Activated T-helper 1 cell treated with anti-CD3 and anti-CD28 coated beads, Interleukin-12 subunit alpha, Interleukin-12 subunit beta, Interleukin-2, Interleukin-4 antibody, amounts not matched to agents 30 ng/mL and 10 ng/mL and 1 ng/mL, durations not matched to agents 14 hours and 24 hours and 36 hours (primary cell): ENCODE measurements at regions of chr13 and their contacts with region 1.

Region 1: GRCh38 chr13:49278211-49278610 is 30.5 kb downstream of the CDADC1 start:
- DNase-seq: no peak
- H3K4me3 Mint-ChIP-seq: no peak overlapping the region
- H3K27ac Mint-ChIP-seq: no peak overlapping the region
- H3K4me1 Mint-ChIP-seq: no peaks in the 10 kb centered on the region
- H3K27me3 Mint-ChIP-seq: no peaks in the 10 kb centered on the region

Region 2: GRCh38 chr13:48595431-48596429 is 682.5 kb before region 1 on chr13:
- intact Hi-C with region 1: loop called (anchors 5 kb)
- DNase-seq: peak; percentile 12
- H3K4me3 Mint-ChIP-seq: no peak overlapping the region
- H3K27ac Mint-ChIP-seq: no peak overlapping the region
- H3K4me1 Mint-ChIP-seq: no peaks in the 10 kb centered on the region
- H3K27me3 Mint-ChIP-seq: peaks cover 13% of the 10 kb centered on the region

Region 3: DNA sequence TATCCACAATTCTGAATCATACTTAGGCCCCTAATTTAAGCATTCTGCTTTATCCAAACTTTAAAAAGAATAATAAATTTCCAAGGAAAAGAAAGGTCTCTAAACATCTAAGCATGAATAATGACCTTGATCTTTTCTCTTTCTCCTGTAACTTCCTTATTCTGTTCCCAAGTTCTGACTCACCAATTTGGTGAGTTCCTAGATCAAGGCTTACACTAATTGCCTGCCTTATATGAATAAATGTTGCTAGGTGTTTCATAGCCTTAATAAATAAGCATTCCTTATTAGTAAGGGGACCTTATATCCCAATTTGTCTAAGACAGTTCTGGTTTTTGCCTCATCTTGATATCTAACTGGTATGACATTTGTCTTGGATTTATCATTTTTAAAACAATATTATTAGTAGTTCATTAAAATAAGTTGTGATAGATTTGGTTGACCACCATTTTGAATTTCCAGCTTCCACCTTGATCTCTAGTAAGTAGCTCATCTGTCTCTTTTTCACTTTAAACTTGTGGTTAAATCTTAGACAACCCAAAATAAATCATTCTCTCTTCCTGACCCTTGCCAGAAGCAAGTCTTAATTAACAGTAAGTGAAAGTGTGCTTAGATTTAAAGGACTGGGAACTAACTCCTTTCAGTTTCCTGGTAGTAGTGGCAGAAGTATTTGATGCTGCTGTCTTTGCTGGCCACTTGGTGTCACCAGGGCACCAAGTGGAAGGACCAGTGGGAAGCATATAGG is 179.3 kb before region 1 on chr13:
- intact Hi-C with region 1: loop called (anchors 1 kb)
- DNase-seq: no peak
- H3K4me3 Mint-ChIP-seq: no peak overlapping the region
- H3K27ac Mint-ChIP-seq: no peak overlapping the region
- H3K4me1 Mint-ChIP-seq: peaks cover 18% of the 10 kb centered on the region
- H3K27me3 Mint-ChIP-seq: no peaks in the 10 kb centered on the region

Region 4: DNA sequence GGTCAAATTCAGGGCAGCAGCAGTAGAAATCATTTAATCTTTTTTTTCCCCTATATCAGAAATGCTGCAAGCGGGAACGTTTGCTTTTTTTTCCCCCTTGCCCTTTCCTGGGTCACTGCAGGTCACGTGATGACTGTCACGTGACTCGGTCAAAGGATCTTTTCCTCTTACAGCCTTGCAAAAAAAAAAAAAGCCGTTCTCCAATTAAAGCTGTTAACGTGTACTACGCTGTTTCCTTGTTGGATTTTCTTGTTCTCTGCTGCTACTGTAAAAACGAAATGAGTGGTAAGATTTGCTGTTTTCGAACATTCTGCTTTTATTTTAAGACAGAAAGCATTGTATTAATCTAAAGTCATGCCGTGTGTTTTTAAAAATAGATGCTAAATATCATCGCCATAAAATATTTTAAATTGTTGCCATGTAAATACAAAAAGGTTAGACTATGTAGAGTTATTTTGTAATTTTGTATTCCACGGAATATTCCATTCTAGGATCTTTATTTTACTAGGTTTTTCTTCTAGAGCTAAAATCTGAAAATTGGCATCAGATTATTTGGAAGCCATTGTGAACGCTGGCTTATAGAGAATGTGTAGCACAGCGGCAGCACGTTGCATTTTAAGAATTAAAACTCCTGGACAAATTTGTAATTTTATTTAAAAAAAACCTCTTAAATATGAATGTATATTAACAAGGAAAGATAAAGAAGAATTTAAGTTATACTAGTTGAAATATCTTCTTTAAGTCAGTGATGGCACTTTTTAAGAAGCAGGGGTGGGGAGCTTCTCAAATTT is 167.9 kb before region 1 on chr13:
- intact Hi-C with region 1: loop called (anchors 5 kb)
- DNase-seq: peak; percentile 71
- H3K4me3 Mint-ChIP-seq: peak overlapping the region; percentile 87
- H3K27ac Mint-ChIP-seq: peak overlapping the region; percentile 70
- H3K4me1 Mint-ChIP-seq: peaks cover 31% of the 10 kb centered on the region
- H3K27me3 Mint-ChIP-seq: no peaks in the 10 kb centered on the region

Region 5: GRCh38 chr13:49240017-49240416 is 38.2 kb before region 1 on chr13:
- intact Hi-C with region 1: loop called (anchors 1 kb)
- DNase-seq: no peak
- H3K4me3 Mint-ChIP-seq: no peak overlapping the region
- H3K27ac Mint-ChIP-seq: no peak overlapping the region
- H3K4me1 Mint-ChIP-seq: no peaks in the 10 kb centered on the region
- H3K27me3 Mint-ChIP-seq: peaks cover 12% of the 10 kb centered on the region

Region 6: DNA sequence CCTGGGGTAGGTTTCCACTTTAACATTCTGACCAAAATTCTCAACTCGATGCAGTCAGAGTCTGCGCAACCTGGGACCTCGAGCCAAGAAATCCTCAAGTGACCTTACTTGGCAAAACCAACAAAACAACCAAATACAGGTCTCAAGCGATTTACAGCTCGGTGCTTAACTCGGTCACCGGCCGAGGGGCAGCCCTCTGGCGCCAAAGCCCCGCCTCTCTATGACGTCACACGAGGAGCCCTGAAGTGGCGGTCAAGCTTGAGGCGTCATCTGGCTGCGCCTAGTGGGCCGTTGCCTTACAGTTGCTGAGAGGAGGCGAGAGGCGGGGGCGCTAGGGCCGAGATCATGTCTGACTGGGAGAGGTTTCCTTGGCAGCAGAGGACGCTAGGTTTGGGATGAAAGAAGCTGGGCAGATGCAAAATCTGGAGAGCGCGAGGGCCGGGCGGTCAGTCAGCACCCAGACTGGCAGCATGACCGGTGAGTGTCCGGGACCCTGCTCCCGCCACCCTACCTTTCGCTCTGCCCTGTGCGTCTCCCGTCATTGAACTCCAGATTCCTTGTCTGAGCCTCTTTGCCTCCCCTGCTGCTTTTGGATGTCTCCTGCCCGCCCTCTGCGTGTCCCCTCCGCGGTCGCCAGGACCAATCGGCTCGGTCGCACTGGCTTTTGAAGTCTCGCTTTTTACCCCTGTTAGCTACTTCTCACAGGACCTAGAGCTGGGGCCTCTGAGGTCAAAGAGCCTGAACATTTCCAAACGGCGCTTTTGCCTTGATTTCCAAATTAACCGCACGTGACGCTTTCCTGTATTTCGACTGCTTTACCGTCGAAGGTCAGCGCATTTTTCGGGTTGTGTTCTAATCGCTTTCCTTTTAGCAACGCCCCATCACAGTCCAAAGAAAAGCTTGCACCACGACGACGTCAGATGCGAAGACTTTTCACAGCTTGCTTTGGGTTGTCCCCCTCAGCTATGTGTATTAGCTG is 30.3 kb before region 1 on chr13 and contains the start of gene CDADC1:
- intact Hi-C with region 1: loop called (anchors 2 kb)
- DNase-seq: peak; percentile 90
- H3K4me3 Mint-ChIP-seq: peak within 1 kb of the TSS; percentile 97
- H3K27ac Mint-ChIP-seq: peak within 1 kb of the TSS; percentile 97
- H3K4me1 Mint-ChIP-seq: peaks cover 40% of the 10 kb centered on the region
- H3K27me3 Mint-ChIP-seq: peaks cover 14% of the 10 kb centered on the region
- total RNA-seq, gene CDADC1: 8.1 and 9.5 TPM in 2 replicates